ENCODE measurements at regions of chr15 and their contacts with region 1.

Region 1: DNA sequence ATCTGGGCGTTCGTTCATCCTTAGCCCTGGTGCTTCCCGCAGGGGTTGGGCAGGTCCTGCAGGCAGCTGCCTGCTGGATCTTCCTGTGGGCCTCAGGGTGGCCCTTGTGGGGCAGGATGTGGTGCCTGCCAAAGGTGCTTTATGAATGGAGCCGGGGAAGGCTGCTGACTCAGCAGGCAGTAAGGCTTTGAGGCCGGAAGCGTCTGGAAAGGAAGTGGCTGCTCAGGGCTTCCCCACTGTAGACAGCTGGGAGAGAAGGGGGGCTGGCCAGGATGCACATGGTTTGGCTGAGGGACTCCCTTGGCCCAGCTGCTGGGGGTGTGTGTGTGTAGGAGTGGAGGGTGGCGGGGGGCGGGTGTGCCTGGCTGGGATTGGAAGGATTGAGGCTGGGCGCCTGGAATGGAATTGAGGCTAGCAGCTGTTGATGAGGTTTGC is 12.9 kb downstream of the CD276 start:
- DNase-seq: peak; percentile 81
- H3K4me3 ChIP-seq: no peak overlapping the region
- H3K27ac ChIP-seq: peak overlapping the region; percentile 80
- H3K27me3 ChIP-seq: no peaks in the 10 kb centered on the region
- CTCF ChIP-seq: no peak

Region 2: DNA sequence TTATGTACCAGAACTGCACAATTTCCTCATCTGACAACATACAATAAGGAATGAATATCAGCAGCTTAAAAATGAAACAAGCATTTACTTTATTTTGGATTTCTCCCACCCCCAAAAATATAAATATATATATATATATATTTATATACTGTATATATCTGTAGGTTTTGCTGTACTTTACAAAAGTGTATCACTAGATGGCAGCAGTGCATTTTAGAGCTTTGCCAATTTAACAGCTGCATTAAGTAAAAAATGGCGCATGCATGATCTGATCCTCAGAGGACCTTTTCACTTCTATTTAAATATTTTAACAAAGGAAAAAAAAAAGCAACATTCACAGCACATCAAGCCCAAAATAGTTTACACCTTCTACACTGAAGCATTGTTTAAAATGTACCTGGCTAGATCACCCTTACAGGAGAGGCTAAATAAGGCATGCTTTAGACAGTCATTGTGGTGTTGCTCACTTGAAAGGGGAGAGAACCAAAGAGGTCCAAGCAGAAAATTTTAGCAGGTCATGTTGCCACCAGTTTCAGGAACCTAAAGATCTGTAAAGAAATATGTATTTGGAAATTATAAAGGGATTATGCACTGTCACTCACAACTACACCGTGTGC is 136.4 kb before region 1 on chr15:
- CTCF ChIA-PET with region 1: interaction called, 117 read pairs
- POLR2A ChIA-PET with region 1: no interaction called
- DNase-seq: peak; percentile 55
- H3K4me3 ChIP-seq: no peak overlapping the region
- H3K27ac ChIP-seq: no peak overlapping the region
- H3K27me3 ChIP-seq: no peaks in the 10 kb centered on the region
- CTCF ChIP-seq: peak; percentile 61

Region 3: GRCh38 chr15:73573572-73573971 is 123.5 kb before region 1 on chr15:
- CTCF ChIA-PET with region 1: interaction called, 15 read pairs
- POLR2A ChIA-PET with region 1: interaction called, 7 read pairs
- DNase-seq: peak; percentile 82
- H3K4me3 ChIP-seq: no peak overlapping the region
- H3K27ac ChIP-seq: peak overlapping the region; percentile 66
- H3K27me3 ChIP-seq: no peaks in the 10 kb centered on the region
- CTCF ChIP-seq: no peak

Region 4: GRCh38 chr15:73624530-73624929 is 72.5 kb before region 1 on chr15:
- CTCF ChIA-PET with region 1: interaction called, 304 read pairs
- POLR2A ChIA-PET with region 1: no interaction called
- DNase-seq: no peak
- H3K4me3 ChIP-seq: no peak overlapping the region
- H3K27ac ChIP-seq: no peak overlapping the region
- H3K27me3 ChIP-seq: no peaks in the 10 kb centered on the region
- CTCF ChIP-seq: no peak

Region 5: GRCh38 chr15:73650416-73651126 is 46.5 kb before region 1 on chr15:
- CTCF ChIA-PET with region 1: interaction called, 10 read pairs
- POLR2A ChIA-PET with region 1: no interaction called
- DNase-seq: no peak
- H3K4me3 ChIP-seq: no peak overlapping the region
- H3K27ac ChIP-seq: no peak overlapping the region
- H3K27me3 ChIP-seq: peaks cover 5% of the 10 kb centered on the region
- CTCF ChIP-seq: no peak

Region 6: DNA sequence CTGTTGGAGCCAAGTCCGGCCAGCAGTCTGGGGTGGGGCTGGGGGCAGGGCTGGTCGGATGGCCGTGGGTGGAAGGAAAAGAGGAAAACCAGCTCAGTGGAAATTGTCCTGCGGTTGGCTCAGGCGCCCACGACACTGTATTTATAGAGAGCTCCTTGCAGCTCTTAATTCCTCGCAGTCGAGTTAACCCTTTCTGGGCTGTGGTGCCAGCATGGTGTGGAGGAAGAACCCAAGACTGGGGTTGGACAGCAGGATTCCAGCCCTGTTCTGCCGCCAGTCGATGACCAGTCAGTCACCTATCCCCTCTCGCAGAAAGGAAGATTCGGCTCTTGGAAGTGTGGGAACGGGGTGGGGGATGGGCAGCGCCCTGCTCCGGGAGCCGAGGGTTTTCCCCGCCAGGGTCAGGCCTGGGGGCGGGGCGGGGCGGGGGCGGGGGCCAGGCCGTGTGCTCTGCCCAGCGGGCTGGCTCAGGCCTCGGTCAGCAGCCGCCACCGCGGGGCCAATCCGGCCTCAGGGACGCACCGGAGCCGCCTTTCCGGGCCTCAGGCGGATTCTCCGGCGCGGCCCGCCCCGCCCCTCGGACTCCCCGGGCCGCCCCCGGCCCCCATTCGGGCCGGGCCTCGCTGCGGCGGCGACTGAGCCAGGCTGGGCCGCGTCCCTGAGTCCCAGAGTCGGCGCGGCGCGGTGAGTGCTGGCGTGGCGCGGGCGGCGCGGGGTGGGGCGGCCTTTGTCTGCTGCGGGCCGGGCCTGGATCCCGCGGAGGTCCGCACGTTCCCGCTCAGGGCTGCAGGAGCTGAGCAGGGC is 13.1 kb before region 1 on chr15 and contains the start of gene CD276:
- CTCF ChIA-PET with region 1: interaction called, 92 read pairs
- POLR2A ChIA-PET with region 1: interaction called, 9 read pairs
- DNase-seq: no peak
- H3K4me3 ChIP-seq: peak within 1 kb of the TSS; percentile 84
- H3K27ac ChIP-seq: peak within 1 kb of the TSS; percentile 70
- H3K27me3 ChIP-seq: no peaks in the 10 kb centered on the region
- CTCF ChIP-seq: no peak
- polyA plus RNA-seq, gene CD276: 86.4 and 101 TPM in 2 replicates